Activated T-helper 1 cell treated with anti-CD3 and anti-CD28 coated beads, Interleukin-12 subunit alpha, Interleukin-12 subunit beta, Interleukin-2, Interleukin-4 antibody, amounts not matched to agents 30 ng/mL and 10 ng/mL and 1 ng/mL, durations not matched to agents 14 hours and 24 hours and 36 hours (primary cell): ENCODE measurements at regions of chr11 and their contacts with region 1.

Region 1: GRCh38 chr11:19240420-19241259 is at the start of gene E2F8:
- DNase-seq: peak; percentile 92
- H3K4me3 Mint-ChIP-seq: peak within 1 kb of the TSS; percentile 96
- H3K27ac Mint-ChIP-seq: peak within 1 kb of the TSS; percentile 89
- H3K4me1 Mint-ChIP-seq: peaks cover 46% of the 10 kb centered on the region
- H3K27me3 Mint-ChIP-seq: peaks cover 15% of the 10 kb centered on the region
- total RNA-seq, gene E2F8: 25.6 and 28.2 TPM in 2 replicates

Region 2: DNA sequence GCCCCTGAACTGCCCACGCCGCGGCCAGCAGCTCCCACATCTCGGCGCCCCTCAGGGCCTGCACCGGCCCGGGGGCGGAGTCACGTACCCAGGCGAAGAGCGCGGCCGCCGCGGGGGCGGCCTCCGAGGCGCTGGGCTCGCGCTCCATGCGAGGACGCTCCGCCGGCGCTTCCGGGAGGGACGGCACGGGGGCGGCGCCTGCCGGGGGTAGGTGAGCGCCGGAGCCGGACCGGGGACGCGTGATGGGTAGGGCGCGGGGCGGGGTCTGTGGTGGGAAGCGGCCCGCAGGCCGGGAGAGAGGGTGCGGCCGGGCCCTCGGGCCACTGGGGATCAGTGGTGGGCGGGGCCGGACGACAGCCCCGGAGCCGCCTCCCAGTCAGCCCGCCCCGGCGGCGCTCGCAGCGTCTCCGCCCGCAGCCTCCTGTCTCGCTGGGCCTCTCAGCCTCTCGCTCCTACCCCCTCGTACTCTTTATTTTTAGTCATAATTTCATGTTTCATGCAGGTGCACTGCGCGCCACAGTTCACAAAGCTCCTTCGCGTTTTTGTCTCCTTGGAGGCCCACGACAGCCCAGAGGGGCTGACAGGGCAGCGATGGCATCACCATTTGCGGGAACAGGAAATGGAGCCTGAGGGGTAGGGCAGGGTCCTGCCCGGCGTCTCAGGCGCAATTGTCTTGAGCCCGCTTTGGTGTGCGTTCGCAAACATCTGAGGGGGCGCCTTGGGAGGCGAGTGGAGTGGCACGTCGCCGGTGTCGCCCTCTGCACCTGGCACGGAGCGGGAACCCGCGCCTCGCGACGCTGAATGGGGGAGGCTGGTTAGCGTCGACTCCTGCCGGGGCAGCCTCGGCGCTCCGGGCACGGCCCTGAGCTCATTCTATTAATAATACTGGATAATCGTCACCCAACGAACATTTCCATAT is 1227.5 kb before region 1 on chr11 and contains the start of gene SERGEF:
- intact Hi-C with region 1: loop called (anchors 1 kb)
- DNase-seq: peak; percentile 92
- H3K4me3 Mint-ChIP-seq: peak within 1 kb of the TSS; percentile 97
- H3K27ac Mint-ChIP-seq: peak within 1 kb of the TSS; percentile 98
- H3K4me1 Mint-ChIP-seq: peaks cover 44% of the 10 kb centered on the region
- H3K27me3 Mint-ChIP-seq: peaks cover 5% of the 10 kb centered on the region
- total RNA-seq, gene SERGEF: 24.5 and 32.8 TPM in 2 replicates

Region 3: GRCh38 chr11:18321980-18322711 is 918.5 kb before region 1 on chr11 and contains the starts of genes GTF2H1 and HPS5:
- intact Hi-C with region 1: loop called (anchors 5 kb)
- DNase-seq: peak; percentile 95
- H3K4me3 Mint-ChIP-seq: peak within 1 kb of the TSS; percentile 93
- H3K27ac Mint-ChIP-seq: peak within 1 kb of the TSS; percentile 99
- H3K4me1 Mint-ChIP-seq: peaks cover 70% of the 10 kb centered on the region
- H3K27me3 Mint-ChIP-seq: no peaks in the 10 kb centered on the region
- total RNA-seq, gene GTF2H1: 52.2 and 56.9 TPM in 2 replicates
- total RNA-seq, gene HPS5: 19.9 and 21.4 TPM in 2 replicates

Region 4: DNA sequence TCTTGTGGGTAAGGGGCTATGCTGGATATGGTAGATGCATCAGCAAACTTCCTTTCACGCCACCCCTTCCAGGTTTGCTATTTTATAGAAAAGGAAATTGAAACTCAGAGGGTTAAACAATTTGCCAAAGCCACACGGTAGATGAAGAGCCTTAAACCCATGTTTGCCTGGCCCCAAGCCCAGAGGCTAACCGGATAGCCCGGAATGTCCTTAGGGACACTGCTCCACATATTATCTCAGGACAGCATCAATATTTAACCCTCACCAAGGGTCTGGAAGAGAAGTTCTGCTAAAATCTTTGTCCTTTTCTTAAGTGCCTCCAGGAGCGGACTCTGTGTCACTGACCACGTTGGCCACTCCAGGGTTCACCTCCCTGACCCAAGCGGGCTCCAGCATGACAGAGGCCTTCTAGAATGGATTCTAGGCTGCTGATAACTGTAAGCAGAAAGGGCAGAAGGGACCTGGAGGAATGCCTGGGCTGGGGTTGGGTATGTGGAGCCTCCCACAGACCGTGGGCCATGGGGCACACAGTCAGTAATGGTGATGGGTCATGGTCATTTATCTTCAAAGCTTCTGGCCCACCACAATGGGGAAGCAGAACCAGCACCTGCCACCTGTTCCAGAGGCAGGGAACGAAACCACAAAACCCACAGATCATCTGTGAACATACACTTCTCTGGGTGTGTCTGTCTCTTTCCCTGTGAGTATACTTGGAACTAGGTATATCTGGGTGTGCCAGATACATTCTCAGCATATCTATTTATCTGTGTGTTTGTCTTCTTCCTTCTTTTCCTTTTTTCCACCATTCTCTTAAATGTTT is 547.5 kb before region 1 on chr11:
- intact Hi-C with region 1: no loop called
- DNase-seq: no peak
- H3K4me3 Mint-ChIP-seq: no peak overlapping the region
- H3K27ac Mint-ChIP-seq: no peak overlapping the region
- H3K4me1 Mint-ChIP-seq: peaks cover 19% of the 10 kb centered on the region
- H3K27me3 Mint-ChIP-seq: peaks cover 2% of the 10 kb centered on the region

Region 5: DNA sequence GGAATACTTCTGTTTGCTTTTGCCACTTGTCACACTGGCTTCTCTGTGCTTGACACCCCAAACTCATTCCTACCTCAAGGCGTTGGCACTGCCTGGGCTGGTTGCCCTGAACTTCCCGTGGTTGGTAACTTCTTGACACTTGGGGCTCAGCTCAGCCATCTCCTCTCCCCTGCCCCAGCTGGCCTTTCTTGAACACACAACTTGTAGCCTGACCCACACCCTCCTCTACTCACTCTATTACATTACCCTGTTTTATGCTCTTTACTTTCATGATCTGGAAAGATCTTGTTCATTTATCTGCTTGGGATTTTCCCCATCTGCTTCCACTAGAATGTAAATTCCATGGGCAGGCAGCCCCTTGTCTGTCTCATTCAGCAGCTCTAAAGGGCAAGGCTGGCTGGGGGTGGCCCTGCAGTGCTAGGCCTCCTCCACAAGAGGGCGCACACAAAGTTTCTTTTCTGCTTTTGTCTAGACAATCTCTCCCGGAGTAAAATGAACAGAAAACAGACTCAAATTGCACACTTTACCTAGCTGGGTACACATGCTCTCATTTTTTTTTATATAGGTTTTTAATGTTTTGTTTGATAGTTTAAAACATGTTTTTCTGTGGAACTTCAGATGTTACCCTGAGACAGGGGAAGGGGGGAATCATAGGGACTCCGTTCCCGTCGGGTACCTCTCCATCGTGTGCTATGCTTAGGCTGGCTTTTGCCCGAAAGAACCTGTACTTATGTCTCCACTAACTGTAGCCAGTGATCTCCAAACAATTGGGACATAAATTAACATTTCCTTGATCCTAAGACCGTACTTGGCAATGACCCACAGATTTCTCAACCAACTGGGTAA is 163.7 kb before region 1 on chr11:
- intact Hi-C with region 1: loop called (anchors 2 kb)
- DNase-seq: peak; percentile 49
- H3K4me3 Mint-ChIP-seq: no peak overlapping the region
- H3K27ac Mint-ChIP-seq: no peak overlapping the region
- H3K4me1 Mint-ChIP-seq: no peaks in the 10 kb centered on the region
- H3K27me3 Mint-ChIP-seq: peaks cover 9% of the 10 kb centered on the region

Region 6: DNA sequence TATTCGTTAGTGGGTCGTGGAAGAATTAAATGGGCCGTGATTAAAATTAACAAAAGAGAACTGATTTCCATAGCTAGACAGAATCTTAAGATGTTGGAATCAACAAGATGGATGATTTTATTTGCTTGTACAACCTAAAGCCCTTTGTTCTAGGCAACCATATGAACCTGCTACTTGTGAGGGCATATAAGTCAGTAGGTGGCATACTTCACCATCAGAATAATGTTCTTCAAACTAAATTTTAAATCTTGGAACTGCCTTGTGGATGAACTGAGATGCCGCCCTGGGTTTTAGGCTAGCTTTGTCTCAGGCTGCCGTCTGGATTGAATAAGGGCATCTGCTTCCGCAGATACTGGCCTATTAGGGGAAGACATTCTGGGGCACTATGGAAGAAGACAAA is 79.8 kb before region 1 on chr11:
- intact Hi-C with region 1: loop called (anchors 5 kb)
- DNase-seq: no peak
- H3K4me3 Mint-ChIP-seq: no peak overlapping the region
- H3K27ac Mint-ChIP-seq: no peak overlapping the region
- H3K4me1 Mint-ChIP-seq: peaks cover 15% of the 10 kb centered on the region
- H3K27me3 Mint-ChIP-seq: no peaks in the 10 kb centered on the region

Region 7: DNA sequence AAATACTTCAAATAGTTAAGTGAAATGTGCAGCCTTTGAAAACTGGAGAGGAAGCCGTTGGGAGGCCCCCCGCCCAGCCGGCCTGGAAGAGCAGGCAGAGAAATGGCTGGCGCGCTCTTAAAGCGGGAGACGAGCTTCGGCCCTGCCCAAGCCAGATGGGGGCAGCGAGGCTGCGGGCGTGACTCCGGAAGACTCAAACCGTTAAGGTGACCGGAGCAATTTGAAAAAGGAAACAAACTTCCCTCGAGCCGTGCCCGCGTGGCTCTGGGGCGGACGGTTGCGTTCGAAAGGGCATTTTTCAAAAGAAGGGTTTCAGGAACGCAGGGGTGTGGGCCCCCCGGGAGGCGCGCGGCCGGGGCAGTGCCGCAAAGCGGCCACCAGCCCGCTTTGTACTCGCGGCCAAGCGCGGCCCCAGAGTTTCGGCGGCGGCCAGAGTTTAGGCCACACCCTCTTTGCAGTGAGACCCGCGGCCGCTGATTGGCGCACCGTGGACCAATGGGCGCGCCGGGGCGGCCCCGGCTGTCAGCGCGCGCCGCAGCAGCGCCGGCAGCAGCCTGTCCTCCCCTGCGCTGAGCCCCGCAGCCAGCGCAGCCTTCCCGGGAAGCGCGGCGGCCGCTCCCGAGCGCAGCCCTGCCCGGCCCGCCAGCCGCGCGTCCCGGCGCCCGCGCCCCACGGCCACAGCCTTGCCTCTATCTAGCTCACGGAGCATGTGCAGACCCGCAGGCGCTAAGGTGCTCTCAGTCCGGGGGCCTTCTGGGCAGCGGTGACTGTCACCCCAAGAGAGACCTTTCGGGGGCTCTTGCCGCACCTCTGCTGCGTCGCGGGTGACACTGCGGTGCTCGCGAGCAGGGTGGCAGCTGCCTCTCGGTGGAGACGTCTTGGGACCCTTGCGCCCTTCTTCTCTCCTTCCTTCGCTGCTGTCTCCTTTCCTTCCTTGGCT is 471.9 kb after region 1 on chr11 and contains the start of gene NAV2:
- intact Hi-C with region 1: loop called (anchors 1 kb)
- DNase-seq: peak; percentile 75
- H3K4me3 Mint-ChIP-seq: peak within 1 kb of the TSS; percentile 85
- H3K27ac Mint-ChIP-seq: peak within 1 kb of the TSS; percentile 78
- H3K4me1 Mint-ChIP-seq: peaks cover 17% of the 10 kb centered on the region
- H3K27me3 Mint-ChIP-seq: peaks cover 58% of the 10 kb centered on the region
- total RNA-seq, gene NAV2: 0.12 and 0.34 TPM in 2 replicates

Region 8: DNA sequence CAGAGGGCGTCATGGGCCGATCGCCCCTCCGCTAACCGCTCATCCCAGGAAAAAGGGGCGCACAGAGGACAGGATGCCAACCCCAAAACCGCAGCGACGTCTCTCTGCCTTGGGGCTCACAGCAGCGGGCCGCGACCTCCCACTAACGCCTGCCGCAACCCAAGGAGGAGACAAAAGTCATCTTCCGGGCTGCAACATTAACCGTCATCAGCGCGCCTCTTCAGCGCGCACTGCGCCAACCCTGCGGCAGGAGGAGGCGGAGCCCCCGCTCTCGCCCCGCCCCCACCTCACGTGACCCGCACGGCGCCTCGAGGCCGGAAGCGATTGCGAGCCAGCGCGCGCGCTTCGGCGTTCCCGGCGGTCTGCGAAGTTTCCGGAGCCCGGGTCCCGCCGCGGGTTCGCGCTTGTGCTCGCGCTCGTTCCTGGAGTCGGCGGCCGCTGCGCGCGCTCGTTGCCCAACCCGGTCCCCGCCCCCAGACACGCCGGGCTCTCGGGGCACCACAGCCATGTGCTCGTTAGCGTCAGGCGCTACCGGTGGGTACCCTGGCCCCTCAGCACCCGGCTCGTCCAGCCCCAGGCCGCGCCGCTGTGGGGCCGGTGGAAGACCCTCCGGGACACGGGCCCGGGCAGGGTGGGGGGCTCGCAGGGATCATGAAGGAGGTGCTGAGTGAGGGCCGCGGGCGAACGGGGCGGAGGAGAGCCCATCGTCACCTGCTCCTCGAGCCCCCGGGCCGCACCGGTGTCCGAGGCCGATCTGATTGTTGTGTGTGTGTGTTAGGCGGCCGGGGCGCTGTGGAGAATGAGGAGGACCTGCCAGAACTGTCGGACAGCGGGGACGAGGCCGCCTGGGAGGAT is 1146.8 kb after region 1 on chr11 and contains the start of gene PRMT3:
- intact Hi-C with region 1: loop called (anchors 1 kb)
- DNase-seq: peak; percentile 97
- H3K4me3 Mint-ChIP-seq: peak within 1 kb of the TSS; percentile 98
- H3K27ac Mint-ChIP-seq: peak within 1 kb of the TSS; percentile 98
- H3K4me1 Mint-ChIP-seq: peaks cover 12% of the 10 kb centered on the region
- H3K27me3 Mint-ChIP-seq: no peaks in the 10 kb centered on the region
- total RNA-seq, gene PRMT3: 43.7 and 45.5 TPM in 2 replicates